Right lobe of liver (tissue), 6 donors: ENCODE measurements at regions of chr3 and their contacts with region 1.

Region 1: GRCh38 chr3:194472290-194472920 is 14.4 kb downstream of the ATP13A3 start:
- DNase-seq: no peak
- ATAC-seq: peak; percentile 85 to 93 (median 86)
- H3K4me3 ChIP-seq: no peak overlapping the region
- H3K27ac ChIP-seq: no peak overlapping the region
- H3K4me1 ChIP-seq: peaks cover 0 to 20% (median 4%) of the 10 kb centered on the region in 4 donors
- H3K27me3 ChIP-seq: no peaks in the 10 kb centered on the region
- CTCF ChIP-seq: peak; percentile 91 to 98 (median 94)
- POLR2A ChIP-seq: no peak

Region 2: GRCh38 chr3:194556086-194557056 is 84.0 kb after region 1 on chr3:
- intact Hi-C with region 1: no loop called
- DNase-seq: no peak
- ATAC-seq: peak in 3 of 4 donors; percentile 5 to 21 (median 12)
- H3K4me3 ChIP-seq: peak overlapping the region in 2 of 3 donors; percentile 4 to 15
- H3K27ac ChIP-seq: no peak overlapping the region
- H3K4me1 ChIP-seq: peaks cover 0 to 22% (median 10%) of the 10 kb centered on the region in 4 donors
- H3K27me3 ChIP-seq: no peaks in the 10 kb centered on the region
- CTCF ChIP-seq: no peak
- POLR2A ChIP-seq: no peak

Region 3: GRCh38 chr3:194573691-194574437 is 101.5 kb after region 1 on chr3:
- intact Hi-C with region 1: loop called in 1 of 2 experiments (anchors 10 kb)
- DNase-seq: peak in 2 of 3 donors; percentile 55 to 62
- ATAC-seq: peak; percentile 81 to 88 (median 85)
- H3K4me3 ChIP-seq: no peak overlapping the region
- H3K27ac ChIP-seq: no peak overlapping the region
- H3K4me1 ChIP-seq: peaks cover 0 to 14% (median 6%) of the 10 kb centered on the region in 4 donors
- H3K27me3 ChIP-seq: no peaks in the 10 kb centered on the region
- CTCF ChIP-seq: peak; percentile 66 to 69 (median 67)
- POLR2A ChIP-seq: no peak

Region 4: DNA sequence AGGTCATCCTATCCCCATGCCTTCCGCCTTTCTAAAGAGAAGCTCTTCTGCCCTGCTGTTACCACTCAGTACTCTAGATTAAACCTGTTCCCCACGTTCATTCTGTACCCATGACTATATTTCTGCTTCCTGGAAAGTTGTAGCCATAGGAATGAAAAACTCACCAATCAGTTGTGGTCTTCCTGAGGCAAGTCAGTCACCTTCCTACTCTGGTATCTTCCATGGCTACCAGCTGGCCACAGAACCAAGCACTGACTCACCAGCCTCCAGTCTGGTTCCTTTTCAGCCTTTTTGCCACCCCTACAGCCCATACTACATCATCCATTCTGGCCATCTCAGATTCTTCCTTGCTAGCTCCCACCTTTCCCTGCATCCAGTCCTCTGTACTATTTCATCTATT is 114.4 kb after region 1 on chr3:
- intact Hi-C with region 1: loop called in 1 of 2 experiments (anchors 5 kb)
- DNase-seq: no peak
- ATAC-seq: no peak
- H3K4me3 ChIP-seq: no peak overlapping the region
- H3K27ac ChIP-seq: no peak overlapping the region
- H3K4me1 ChIP-seq: peaks cover 0 to 9% (median 0%) of the 10 kb centered on the region in 4 donors
- H3K27me3 ChIP-seq: no peaks in the 10 kb centered on the region
- CTCF ChIP-seq: no peak
- POLR2A ChIP-seq: no peak